MCF 10A (cell line): ENCODE measurements at regions of chr1 and their contacts with region 1.

Region 1: GRCh38 chr1:161192476-161193465 is 6.1 kb downstream of the ADAMTS4 start:
- DNase-seq: peak; percentile 88
- H3K4me3 Mint-ChIP-seq: no peak overlapping the region
- H3K27ac Mint-ChIP-seq: peak overlapping the region; percentile 71
- H3K4me1 Mint-ChIP-seq: peaks cover 20% of the 10 kb centered on the region
- H3K27me3 Mint-ChIP-seq: no peaks in the 10 kb centered on the region
- CTCF ChIP-seq: peak; percentile 92

Region 2: GRCh38 chr1:161165742-161166668 is 26.8 kb before region 1 on chr1 and contains the start of gene PPOX:
- CTCF ChIA-PET with region 1: interaction called, 31 read pairs
- POLR2A ChIA-PET with region 1: no interaction called
- intact Hi-C with region 1: no loop called
- DNase-seq: peak; percentile 100
- H3K4me3 Mint-ChIP-seq: peak within 1 kb of the TSS; percentile 98
- H3K27ac Mint-ChIP-seq: peak within 1 kb of the TSS; percentile 100
- H3K4me1 Mint-ChIP-seq: peaks cover 47% of the 10 kb centered on the region
- H3K27me3 Mint-ChIP-seq: no peaks in the 10 kb centered on the region
- CTCF ChIP-seq: peak; percentile 36
- total RNA-seq, gene PPOX: 30.3 and 32.4 TPM in 2 replicates

Region 3: GRCh38 chr1:161209790-161210409 is 17.1 kb after region 1 on chr1:
- CTCF ChIA-PET with region 1: interaction called, 122 read pairs
- POLR2A ChIA-PET with region 1: interaction called, 4 read pairs
- intact Hi-C with region 1: no loop called
- DNase-seq: peak; percentile 91
- H3K4me3 Mint-ChIP-seq: no peak overlapping the region
- H3K27ac Mint-ChIP-seq: no peak overlapping the region
- H3K4me1 Mint-ChIP-seq: peaks cover 25% of the 10 kb centered on the region
- H3K27me3 Mint-ChIP-seq: no peaks in the 10 kb centered on the region
- CTCF ChIP-seq: peak; percentile 95

Region 4: DNA sequence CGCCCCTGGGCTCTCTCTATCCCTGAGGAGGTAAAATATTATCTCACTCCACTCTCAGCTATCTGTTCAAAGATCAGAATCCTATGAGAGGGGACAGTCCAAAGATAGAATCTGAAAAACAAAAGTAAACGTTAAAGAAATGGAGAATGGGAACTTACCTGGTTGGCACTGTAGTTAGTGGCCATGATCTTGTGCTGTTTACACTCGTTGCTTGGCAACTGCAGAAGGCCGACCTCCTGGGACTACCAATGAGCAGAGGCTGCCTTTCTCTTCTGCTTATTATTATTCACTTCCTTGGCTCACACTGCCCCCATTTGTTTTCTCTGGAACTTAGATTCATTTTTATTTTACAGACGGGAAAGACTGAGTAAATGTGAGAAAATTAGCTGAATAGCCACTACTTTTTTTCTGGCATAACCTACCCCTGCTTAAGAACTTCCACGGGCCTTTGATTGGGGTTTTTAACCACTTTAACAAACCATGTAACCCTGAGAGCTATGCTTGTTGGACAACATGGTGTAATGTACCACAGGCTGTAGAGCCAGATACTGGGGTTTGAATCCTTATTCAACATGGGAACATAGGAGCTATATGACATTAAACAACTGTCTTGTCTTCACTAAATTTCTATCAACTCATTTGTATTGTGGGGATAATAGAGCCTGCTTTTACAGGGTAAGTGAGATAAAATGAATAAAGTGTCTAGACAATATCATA is 175.1 kb after region 1 on chr1 and contains the start of gene CFAP126:
- CTCF ChIA-PET with region 1: interaction called, 10 read pairs
- POLR2A ChIA-PET with region 1: no interaction called
- intact Hi-C with region 1: no loop called
- DNase-seq: peak; percentile 75
- H3K4me3 Mint-ChIP-seq: no peak within 1 kb of the TSS
- H3K27ac Mint-ChIP-seq: peak within 1 kb of the TSS; percentile 36
- H3K4me1 Mint-ChIP-seq: peaks cover 5% of the 10 kb centered on the region
- H3K27me3 Mint-ChIP-seq: no peaks in the 10 kb centered on the region
- CTCF ChIP-seq: no peak
- total RNA-seq, gene CFAP126: not detected in 2 replicates